ENCODE measurements at regions of chrX and their contacts with region 1.

Region 1: DNA sequence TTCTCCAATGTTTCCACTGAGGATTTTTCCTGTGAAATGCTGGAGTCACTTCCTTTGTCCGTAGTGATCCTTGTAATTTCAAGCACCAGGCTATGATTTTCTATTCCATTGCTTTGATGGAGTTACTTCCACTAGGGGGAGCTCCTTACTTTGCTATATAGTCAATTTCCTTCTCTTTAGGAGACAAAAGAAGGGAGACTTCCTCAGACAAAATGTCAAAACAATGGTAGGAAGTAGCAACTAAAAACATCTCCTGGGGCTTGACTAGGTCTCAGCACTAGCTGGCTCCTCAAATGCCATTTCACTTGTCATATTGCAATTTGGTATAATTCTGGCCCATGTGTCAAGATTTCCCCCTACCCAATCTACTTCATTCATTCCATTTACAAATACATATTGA is 24.1 kb downstream of the ZCCHC12 start:
- DNase-seq: peak; percentile 49 to 51
- ATAC-seq: peak; percentile 71 to 81
- H3K4me3 ChIP-seq: no peak overlapping the region
- H3K27ac ChIP-seq: no peak overlapping the region
- H3K4me1 ChIP-seq: no peaks in the 10 kb centered on the region
- CTCF ChIP-seq: peak; percentile 70
- EP300 ChIP-seq: no peak
- POLR2A ChIP-seq: no peak
- RAD21 ChIP-seq: peak; percentile 83 to 86

Region 2: DNA sequence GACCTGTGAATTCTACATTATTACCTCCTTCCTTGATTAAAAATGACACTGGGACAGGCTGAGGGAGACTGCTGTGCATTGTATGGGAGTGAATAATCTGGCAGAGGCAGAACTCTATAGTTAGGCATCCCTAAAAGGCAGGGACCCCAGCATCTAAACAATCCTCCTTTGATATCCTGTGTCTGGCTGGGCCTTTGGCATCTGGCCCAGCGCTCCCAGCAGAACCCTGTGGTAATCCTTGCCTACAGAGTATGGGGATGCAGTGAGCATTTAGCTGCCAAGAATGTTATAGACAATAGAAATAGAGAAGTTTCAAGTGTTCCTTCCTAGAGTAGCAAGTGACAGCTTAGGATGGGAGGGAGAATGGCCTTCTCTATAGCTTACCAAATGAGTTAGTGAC is 14.4 kb after region 1 on chrX:
- CTCF ChIA-PET with region 1: interaction called, 13 read pairs
- POLR2A ChIA-PET with region 1: no interaction called
- DNase-seq: no peak
- ATAC-seq: no peak
- H3K4me3 ChIP-seq: no peak overlapping the region
- H3K27ac ChIP-seq: no peak overlapping the region
- H3K4me1 ChIP-seq: no peaks in the 10 kb centered on the region
- CTCF ChIP-seq: no peak
- EP300 ChIP-seq: no peak
- POLR2A ChIP-seq: no peak
- RAD21 ChIP-seq: no peak

Region 3: GRCh38 chrX:118878977-118879376 is 31.3 kb after region 1 on chrX:
- CTCF ChIA-PET with region 1: no interaction called
- POLR2A ChIA-PET with region 1: no interaction called
- DNase-seq: no peak
- ATAC-seq: no peak
- H3K4me3 ChIP-seq: no peak overlapping the region
- H3K27ac ChIP-seq: no peak overlapping the region
- H3K4me1 ChIP-seq: no peaks in the 10 kb centered on the region
- CTCF ChIP-seq: no peak
- EP300 ChIP-seq: no peak
- POLR2A ChIP-seq: no peak
- RAD21 ChIP-seq: no peak

Region 4: GRCh38 chrX:118893923-118894322 is 46.2 kb after region 1 on chrX:
- CTCF ChIA-PET with region 1: no interaction called
- POLR2A ChIA-PET with region 1: no interaction called
- DNase-seq: no peak
- ATAC-seq: no peak
- H3K4me3 ChIP-seq: no peak overlapping the region
- H3K27ac ChIP-seq: no peak overlapping the region
- H3K4me1 ChIP-seq: no peaks in the 10 kb centered on the region
- CTCF ChIP-seq: no peak
- EP300 ChIP-seq: no peak
- POLR2A ChIP-seq: no peak
- RAD21 ChIP-seq: no peak